Activated CD4-positive, alpha-beta T cell treated with anti-CD3 and anti-CD28 coated beads, Interleukin-2, amount 10 ng/mL, durations not matched to agents 24 days and 14 days (primary cell): ENCODE measurements at regions of chr9 and their contacts with region 1.

Region 1: GRCh38 chr9:129177791-129178559 is at the start of gene IER5L:
- DNase-seq: peak; percentile 99
- H3K4me3 Mint-ChIP-seq: peak within 1 kb of the TSS; percentile 92
- H3K27ac Mint-ChIP-seq: peak within 1 kb of the TSS; percentile 89
- H3K4me1 Mint-ChIP-seq: peaks cover 11% of the 10 kb centered on the region
- H3K27me3 Mint-ChIP-seq: peaks cover 10% of the 10 kb centered on the region
- total RNA-seq, gene IER5L: 11.7 and 12.2 TPM in 2 replicates

Region 2: GRCh38 chr9:129036923-129037766 is 140.8 kb before region 1 on chr9:
- intact Hi-C with region 1: no loop called
- DNase-seq: peak; percentile 66
- H3K4me3 Mint-ChIP-seq: peak overlapping the region; percentile 98
- H3K27ac Mint-ChIP-seq: peak overlapping the region; percentile 84
- H3K4me1 Mint-ChIP-seq: peaks cover 26% of the 10 kb centered on the region
- H3K27me3 Mint-ChIP-seq: peaks cover 2% of the 10 kb centered on the region

Region 3: DNA sequence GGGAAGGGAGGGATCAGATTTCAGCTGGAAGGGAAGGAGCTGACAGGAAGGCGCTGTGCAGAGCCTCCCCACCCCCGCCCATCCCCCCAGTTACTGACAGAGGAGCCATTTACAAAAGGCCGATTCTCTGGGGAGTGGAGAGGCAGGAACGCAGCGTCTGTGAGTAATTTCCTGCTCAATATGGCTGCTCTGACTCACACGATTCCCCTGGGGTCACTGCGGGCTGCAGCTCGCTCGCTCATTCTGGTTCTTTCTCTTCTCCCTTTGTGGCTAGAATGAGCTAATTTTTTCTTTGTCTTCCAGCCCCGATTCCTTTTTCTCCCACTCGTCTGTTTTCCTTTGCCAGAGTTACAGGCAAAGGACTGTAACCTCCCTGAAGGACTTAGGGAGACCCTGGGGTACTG is 38.0 kb before region 1 on chr9:
- intact Hi-C with region 1: loop called (anchors 1 kb)
- DNase-seq: peak; percentile 93
- H3K4me3 Mint-ChIP-seq: peak overlapping the region; percentile 80
- H3K27ac Mint-ChIP-seq: peak overlapping the region; percentile 93
- H3K4me1 Mint-ChIP-seq: peaks cover 37% of the 10 kb centered on the region
- H3K27me3 Mint-ChIP-seq: no peaks in the 10 kb centered on the region

Region 4: DNA sequence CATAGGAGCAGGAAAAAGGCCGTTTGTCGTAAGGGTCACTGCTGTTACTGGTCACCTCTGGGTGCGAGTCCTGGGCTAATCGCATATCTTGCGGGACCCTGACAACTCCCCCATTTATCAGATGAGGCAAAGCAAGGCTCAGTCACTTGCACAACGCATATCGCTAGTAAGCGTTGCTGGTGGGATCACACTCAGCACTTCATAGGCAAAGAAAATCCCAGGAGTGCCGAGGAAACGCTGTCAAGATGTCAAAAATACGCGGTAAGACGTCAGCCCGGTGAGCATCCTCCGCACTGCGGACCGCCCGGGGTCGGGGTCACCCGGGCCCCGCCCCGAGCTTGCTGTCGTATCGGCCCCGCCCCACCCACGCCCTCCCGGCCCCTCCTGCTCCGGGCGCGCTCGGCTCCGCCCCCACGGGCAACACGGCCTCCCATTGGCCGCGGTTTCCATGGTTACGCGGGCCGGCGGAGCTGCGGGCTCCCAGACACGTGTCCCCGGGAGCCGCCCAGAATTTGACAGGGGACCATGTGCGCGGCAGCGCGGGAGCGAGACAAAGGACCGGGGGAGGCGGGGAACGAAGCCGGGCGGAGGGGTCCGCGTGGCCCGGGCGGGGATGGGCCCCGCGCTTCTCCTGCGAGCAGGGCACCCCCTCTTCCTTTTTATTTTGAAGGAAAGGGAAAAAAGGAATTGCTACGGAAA is 80.3 kb after region 1 on chr9:
- intact Hi-C with region 1: loop called (anchors 5 kb)
- DNase-seq: peak; percentile 97
- H3K4me3 Mint-ChIP-seq: peak overlapping the region; percentile 82
- H3K27ac Mint-ChIP-seq: no peak overlapping the region
- H3K4me1 Mint-ChIP-seq: peaks cover 34% of the 10 kb centered on the region
- H3K27me3 Mint-ChIP-seq: peaks cover 42% of the 10 kb centered on the region

Region 5: DNA sequence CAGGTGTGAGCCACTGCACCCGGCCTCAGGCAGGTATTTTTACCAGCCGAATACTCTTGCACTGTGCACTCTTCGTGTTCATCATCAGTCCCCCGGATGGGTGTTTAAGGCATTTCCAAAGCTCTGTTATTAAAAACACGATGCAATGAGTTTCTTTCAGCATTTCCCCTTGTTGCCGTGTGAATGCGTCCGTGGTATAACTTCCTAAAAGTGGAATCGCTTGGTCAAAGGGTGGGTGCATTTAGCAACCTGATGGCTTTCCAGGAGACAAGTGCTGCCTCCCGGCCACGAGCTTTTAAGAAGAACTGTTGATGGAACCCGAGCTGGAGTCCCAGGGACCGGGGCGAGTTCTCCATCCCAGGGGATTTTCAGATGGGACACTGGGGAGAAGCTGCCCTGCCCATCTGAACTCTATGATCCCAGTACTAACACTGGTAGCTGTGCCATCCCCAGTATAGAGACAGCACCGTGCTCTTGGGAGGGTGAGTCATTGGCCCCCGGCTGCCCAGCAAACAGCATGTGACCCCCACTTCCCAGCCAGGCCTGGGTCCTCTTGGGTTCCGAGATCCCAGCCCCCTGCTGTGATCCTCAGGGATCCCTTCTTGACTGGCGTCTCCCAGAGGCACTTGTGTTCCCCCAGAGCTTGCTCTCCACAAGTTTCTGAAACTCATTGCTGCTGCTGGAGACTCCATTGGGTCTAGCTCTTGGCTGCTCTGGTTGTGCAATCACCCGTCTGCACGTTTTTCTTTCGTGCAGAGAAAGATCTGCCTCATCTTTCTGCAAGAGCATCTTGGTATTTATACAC is 169.5 kb after region 1 on chr9:
- intact Hi-C with region 1: loop called (anchors 5 kb)
- DNase-seq: no peak
- H3K4me3 Mint-ChIP-seq: no peak overlapping the region
- H3K27ac Mint-ChIP-seq: no peak overlapping the region
- H3K4me1 Mint-ChIP-seq: peaks cover 3% of the 10 kb centered on the region
- H3K27me3 Mint-ChIP-seq: peaks cover 5% of the 10 kb centered on the region

Region 6: DNA sequence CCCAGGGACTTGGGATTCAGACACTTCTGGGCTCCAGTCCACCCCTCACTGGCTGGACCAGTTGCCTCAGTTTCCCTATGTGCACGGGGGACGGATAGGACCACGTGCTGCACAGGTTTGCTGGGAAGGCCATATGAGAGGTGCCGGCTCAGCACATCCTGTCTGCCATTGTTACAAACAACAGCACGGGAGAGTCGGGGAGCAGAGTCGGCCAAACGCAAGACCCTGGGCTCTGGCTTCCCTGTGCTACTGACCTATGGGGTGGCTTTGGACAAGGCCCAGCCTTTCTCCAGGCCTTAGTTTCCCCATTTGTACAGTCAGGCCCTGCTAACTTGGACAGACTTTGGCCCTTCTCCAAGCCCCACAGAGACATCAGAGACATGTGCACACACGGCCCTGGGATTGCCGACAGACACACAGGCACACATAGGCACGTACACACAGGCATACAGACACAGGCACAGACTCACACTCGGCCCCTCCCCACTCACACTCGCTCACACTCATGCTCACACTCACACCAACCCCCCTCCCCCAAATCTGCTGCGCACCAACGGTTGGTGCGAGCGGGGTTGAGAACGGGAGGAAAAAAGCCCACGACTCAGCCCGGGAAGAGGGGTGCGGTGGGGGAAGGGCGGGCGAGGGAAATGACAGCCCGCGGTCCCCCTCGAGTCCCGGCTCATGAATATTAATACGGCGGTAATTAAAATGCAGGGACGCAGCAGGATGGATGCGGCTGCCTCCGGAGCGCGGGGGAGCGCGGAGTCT is 309.9 kb after region 1 on chr9:
- intact Hi-C with region 1: loop called (anchors 2 kb)
- DNase-seq: peak; percentile 79
- H3K4me3 Mint-ChIP-seq: peak overlapping the region; percentile 92
- H3K27ac Mint-ChIP-seq: peak overlapping the region; percentile 96
- H3K4me1 Mint-ChIP-seq: peaks cover 61% of the 10 kb centered on the region
- H3K27me3 Mint-ChIP-seq: no peaks in the 10 kb centered on the region

Region 7: GRCh38 chr9:129604772-129605171 is 426.8 kb after region 1 on chr9:
- intact Hi-C with region 1: no loop called
- DNase-seq: peak; percentile 77
- H3K4me3 Mint-ChIP-seq: peak overlapping the region; percentile 30
- H3K27ac Mint-ChIP-seq: peak overlapping the region; percentile 60
- H3K4me1 Mint-ChIP-seq: peaks cover 51% of the 10 kb centered on the region
- H3K27me3 Mint-ChIP-seq: peaks cover under 1% of the 10 kb centered on the region